Activated CD4-positive, alpha-beta memory T cell treated with anti-CD3 and anti-CD28 coated beads, Interleukin-2, amount 10 ng/mL, durations not matched to agents 7 days and 5 days (primary cell): ENCODE measurements at regions of chr9 and their contacts with region 1.

Region 1: GRCh38 chr9:120842690-120843499 is at the start of gene PSMD5:
- DNase-seq: peak; percentile 99
- H3K4me3 Mint-ChIP-seq: peak within 1 kb of the TSS; percentile 86
- H3K27ac Mint-ChIP-seq: peak within 1 kb of the TSS; percentile 95
- H3K4me1 Mint-ChIP-seq: peaks cover 75% of the 10 kb centered on the region
- H3K27me3 Mint-ChIP-seq: no peaks in the 10 kb centered on the region
- total RNA-seq, gene PSMD5: 51.8 to 64.0 TPM

Region 2: DNA sequence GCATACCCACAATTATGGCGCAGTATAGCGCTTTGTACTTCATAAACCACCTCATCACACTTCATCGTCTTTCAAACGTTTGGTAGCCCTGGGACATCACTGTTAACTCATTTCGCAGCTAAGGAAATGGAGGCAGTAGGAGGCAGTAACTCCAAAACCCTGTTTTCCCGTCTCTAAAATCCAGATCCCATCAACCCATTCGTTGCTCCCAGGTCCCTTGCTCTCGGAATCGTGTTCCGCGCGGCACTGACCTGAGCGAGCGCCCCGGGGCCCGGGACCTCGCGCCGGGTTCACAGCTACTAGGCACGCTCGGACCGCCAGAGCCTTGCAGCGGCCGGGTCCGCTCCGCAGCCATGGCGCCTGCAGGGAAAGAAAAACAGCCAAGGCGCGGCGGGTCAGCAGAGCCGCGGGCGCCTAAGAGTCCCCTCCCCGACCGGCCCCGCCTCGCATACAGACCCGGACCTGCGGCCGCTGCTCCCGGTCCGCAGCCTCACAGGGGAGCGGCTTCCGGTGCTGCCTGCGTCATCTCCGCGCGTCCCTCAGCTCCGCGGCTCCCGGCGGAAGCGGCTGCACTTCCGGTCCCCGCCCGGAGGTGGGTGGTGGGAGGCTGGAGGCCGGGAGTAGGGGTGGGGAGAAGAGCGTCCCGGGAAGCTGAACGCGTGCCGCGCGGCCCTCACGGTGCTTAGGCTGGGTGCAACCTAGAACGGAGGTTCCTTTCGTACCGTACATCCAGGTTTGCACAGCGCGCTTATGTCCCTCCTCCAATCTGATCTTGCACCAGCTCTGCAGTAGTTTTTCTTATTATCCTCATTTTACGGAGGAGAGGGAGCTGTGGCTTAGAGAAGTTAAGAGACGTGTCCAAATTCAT is 49.8 kb before region 1 on chr9 and contains the start of gene FBXW2:
- CTCF ChIA-PET with region 1: interaction called, 8 read pairs
- POLR2A ChIA-PET with region 1: interaction called, 85 read pairs
- DNase-seq: peak; percentile 91
- H3K4me3 Mint-ChIP-seq: peak within 1 kb of the TSS; percentile 91
- H3K27ac Mint-ChIP-seq: peak within 1 kb of the TSS; percentile 90
- H3K4me1 Mint-ChIP-seq: peaks cover 50% of the 10 kb centered on the region
- H3K27me3 Mint-ChIP-seq: no peaks in the 10 kb centered on the region
- total RNA-seq, gene FBXW2: 90.0 to 90.7 TPM

Region 3: GRCh38 chr9:120868676-120869359 is 25.9 kb after region 1 on chr9:
- CTCF ChIA-PET with region 1: interaction called, 28 read pairs
- POLR2A ChIA-PET with region 1: interaction called, 98 read pairs
- DNase-seq: peak; percentile 97
- H3K4me3 Mint-ChIP-seq: peak overlapping the region; percentile 87
- H3K27ac Mint-ChIP-seq: peak overlapping the region; percentile 92
- H3K4me1 Mint-ChIP-seq: peaks cover 52% of the 10 kb centered on the region
- H3K27me3 Mint-ChIP-seq: no peaks in the 10 kb centered on the region

Region 4: DNA sequence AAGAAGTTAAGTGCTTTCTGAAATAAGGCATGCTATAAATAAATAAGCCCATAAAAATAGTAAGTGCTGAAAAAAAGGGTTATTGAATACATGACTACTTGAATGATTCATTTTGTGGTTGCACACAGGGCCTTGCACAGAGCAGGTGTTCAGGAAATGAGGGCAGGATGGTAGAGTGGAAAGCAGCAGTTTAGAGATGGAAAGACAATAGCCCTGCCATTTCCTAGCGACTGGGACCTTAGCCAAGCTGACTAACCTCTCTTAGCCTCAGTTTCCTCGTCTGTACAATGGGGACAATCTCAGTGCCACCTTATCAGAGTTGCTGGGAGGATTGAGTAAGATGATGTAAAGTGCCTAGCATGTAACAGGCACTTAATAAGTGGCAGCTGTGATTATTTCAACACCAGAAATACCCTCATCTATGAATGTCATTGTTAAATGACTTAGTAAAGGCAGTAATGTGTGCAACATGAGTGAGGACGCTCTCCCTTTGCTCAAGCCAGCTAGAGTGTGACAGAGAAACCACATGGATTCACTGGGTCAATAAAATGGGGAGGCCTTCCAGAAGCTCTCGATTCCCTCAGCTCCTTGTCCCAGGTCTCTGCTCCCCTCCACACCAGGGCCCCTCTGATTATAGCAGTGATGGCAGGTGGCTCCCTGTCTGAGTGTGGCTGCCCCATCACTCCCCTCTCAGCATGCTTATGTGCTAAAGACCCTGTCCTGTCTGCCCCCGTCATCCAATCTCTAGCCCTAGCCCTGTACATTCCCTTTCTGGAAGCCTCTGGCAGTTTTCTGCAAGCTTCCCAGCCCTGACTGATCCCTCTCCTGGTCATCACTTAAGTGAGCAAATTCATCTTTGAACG is 50.1 kb after region 1 on chr9:
- CTCF ChIA-PET with region 1: interaction called, 4 read pairs
- POLR2A ChIA-PET with region 1: interaction called, 31 read pairs
- DNase-seq: peak; percentile 76
- H3K4me3 Mint-ChIP-seq: peak overlapping the region; percentile 65
- H3K27ac Mint-ChIP-seq: peak overlapping the region; percentile 94
- H3K4me1 Mint-ChIP-seq: peaks cover 90% of the 10 kb centered on the region
- H3K27me3 Mint-ChIP-seq: no peaks in the 10 kb centered on the region

Region 5: DNA sequence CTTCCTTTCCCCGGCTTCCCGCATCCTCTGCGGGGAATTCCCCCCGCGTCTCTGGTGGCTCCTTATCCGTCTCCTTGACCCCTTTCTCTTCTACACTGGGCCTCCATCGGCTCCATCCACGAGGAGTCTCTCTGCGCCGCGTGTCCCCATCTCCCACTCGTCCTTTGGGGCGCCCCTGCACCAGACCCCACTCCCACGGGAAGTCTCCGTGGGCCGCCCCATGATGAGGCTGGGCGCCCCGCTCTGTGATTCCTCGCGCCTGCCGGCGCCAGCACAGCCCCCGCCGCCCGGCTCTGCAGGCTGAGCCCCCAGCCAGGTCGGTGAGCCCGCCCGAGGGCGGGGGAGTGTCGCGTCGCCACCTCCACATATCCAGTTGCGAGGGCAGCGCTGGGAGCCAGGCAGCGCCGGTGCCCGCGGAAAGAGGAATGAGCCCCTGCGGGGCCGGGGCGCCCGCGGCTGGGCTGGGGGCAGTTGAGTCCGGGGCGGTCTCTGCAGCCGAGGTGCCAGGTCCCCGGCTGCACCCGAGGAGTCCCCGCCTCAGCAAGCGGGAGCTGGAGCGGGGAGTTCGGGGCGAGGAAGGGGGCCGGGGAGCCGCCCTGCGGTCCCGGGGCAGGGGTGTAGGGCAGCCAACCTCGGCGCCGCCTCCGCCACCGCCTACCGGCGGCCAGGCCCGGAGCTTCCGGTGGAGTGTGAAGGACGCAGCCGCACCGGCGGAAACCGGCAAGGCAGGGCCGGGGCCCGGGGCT is 85.8 kb after region 1 on chr9:
- CTCF ChIA-PET with region 1: interaction called, 3 read pairs
- POLR2A ChIA-PET with region 1: interaction called, 134 read pairs
- DNase-seq: peak; percentile 86
- H3K4me3 Mint-ChIP-seq: peak overlapping the region; percentile 93
- H3K27ac Mint-ChIP-seq: peak overlapping the region; percentile 100
- H3K4me1 Mint-ChIP-seq: peaks cover 79% of the 10 kb centered on the region
- H3K27me3 Mint-ChIP-seq: no peaks in the 10 kb centered on the region

Region 6: GRCh38 chr9:120985810-120986222 is 142.9 kb after region 1 on chr9:
- CTCF ChIA-PET with region 1: no interaction called
- POLR2A ChIA-PET with region 1: no interaction called
- DNase-seq: no peak
- H3K4me3 Mint-ChIP-seq: no peak overlapping the region
- H3K27ac Mint-ChIP-seq: no peak overlapping the region
- H3K4me1 Mint-ChIP-seq: peaks cover 2% of the 10 kb centered on the region
- H3K27me3 Mint-ChIP-seq: peaks cover 5% of the 10 kb centered on the region